ENCODE measurements at regions of chr7 and their contacts with region 1.

Region 1: GRCh38 chr7:112481833-112482670 is 1.3 kb downstream of the LSMEM1 start:
- DNase-seq: peak in 2 of 4 experiments; percentile 50 to 67
- ATAC-seq: peak; percentile 49
- H3K4me3 ChIP-seq: no peak overlapping the region
- H3K27ac ChIP-seq: no peak overlapping the region
- H3K4me1 ChIP-seq: peaks cover 4 to 24% of the 10 kb centered on the region in 2 experiments; a peak in 3 of 5 replicates
- H3K27me3 ChIP-seq: no peaks in the 10 kb centered on the region
- CTCF ChIP-seq: no peak
- EP300 ChIP-seq: no peak
- POLR2A ChIP-seq: no peak
- RAD21 ChIP-seq: no peak

Region 2: DNA sequence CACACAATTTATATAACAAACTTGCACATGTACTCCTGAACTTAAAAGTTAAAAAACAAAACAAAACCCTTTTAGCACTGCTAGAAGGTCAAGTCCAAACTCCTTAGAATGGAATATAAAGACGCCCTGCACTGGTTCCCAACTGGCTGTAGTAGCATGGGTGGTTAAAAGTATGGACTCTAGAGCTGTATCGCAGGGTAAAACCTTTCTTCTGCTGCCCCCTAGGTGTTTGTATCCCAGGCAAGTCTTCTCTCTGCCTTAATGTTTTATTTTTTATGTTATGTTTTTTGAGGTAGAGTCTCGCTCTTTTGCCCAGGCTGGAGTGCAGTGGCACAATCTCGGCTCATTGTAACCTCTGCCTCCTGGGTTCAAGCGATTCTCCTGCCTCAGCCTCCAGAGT is 33.9 kb after region 1 on chr7:
- CTCF ChIA-PET with region 1: no interaction called
- POLR2A ChIA-PET with region 1: no interaction called
- in situ Hi-C with region 1: no loop called
- intact Hi-C with region 1: loop called (anchors 1 kb)
- DNase-seq: peak in 2 of 4 experiments; percentile 23 to 40
- ATAC-seq: peak; percentile 85
- H3K4me3 ChIP-seq: no peak overlapping the region
- H3K27ac ChIP-seq: no peak overlapping the region
- H3K4me1 ChIP-seq: no peaks in the 10 kb centered on the region
- H3K27me3 ChIP-seq: peaks cover 52 to 57% of the 10 kb centered on the region in 2 experiments
- CTCF ChIP-seq: peak; percentile 18 to 49 (median 23); a peak in 3 of 6 replicates
- EP300 ChIP-seq: no peak
- POLR2A ChIP-seq: no peak
- RAD21 ChIP-seq: peak; percentile 20 to 52; a peak in 2 of 4 replicates

Region 3: DNA sequence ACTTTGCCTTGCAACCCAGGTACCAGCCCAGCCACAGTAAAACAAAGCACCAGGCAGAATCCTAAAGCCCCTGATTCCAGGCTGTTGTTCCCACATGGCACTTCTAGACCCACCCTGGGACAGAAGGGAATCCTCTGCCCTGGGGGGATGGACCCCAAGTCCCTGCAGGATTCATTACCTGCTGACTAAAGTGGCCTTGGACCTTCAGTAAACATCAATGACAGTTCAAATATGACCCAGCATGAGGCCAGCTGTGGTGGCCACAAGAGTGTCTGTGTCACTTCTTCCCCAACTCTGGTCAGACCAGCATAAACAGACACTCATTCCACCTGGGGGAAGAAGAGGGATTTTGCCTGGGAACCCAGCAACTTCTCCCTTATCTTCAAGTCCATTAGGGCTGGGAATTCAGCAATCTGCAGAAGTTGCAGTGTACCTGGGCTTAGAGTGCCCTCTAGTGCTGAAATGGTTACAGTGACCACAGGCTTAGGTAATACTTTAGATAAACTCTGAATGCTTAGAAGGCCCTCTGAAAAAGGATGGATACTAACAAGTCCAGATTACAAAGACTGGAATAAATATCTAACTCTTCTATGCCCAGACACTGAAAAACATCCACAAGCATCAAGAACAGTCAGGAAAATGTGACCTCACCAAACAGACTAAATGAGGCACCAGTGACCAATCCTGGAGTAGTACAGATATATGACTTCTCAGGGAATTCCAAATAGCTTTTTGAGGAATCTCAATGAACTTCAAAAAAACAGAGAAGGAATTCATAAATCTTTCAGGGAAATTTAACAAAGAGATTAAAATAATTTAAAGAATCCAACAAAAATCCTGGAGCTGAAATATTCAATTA is 416.6 kb after region 1 on chr7:
- CTCF ChIA-PET with region 1: interaction called, 3 read pairs
- POLR2A ChIA-PET with region 1: no interaction called
- in situ Hi-C with region 1: no loop called
- intact Hi-C with region 1: loop called (anchors 2 kb)
- DNase-seq: peak; percentile 68 to 86 (median 72)
- ATAC-seq: peak; percentile 99
- H3K4me3 ChIP-seq: no peak overlapping the region
- H3K27ac ChIP-seq: no peak overlapping the region
- H3K4me1 ChIP-seq: no peaks in the 10 kb centered on the region; a peak in 1 of 5 replicates
- H3K27me3 ChIP-seq: no peaks in the 10 kb centered on the region
- CTCF ChIP-seq: peak; percentile 88 to 95 (median 91)
- EP300 ChIP-seq: no peak
- POLR2A ChIP-seq: no peak
- RAD21 ChIP-seq: peak; percentile 94 to 97

Measured in K562 (cell line).